Natural killer cell (primary cell): ENCODE measurements at regions of chr3 and their contacts with region 1.

Region 1: GRCh38 chr3:98188545-98188944 is 22.0 kb downstream of the OR5H15 start:
- DNase-seq: peak in 1 of 2 donors; percentile 14
- ATAC-seq: peak in 1 of 3 donors; percentile 35
- H3K4me3 ChIP-seq: no peak overlapping the region
- H3K4me3 Mint-ChIP-seq: no peak overlapping the region
- H3K27ac ChIP-seq: no peak overlapping the region
- H3K27ac Mint-ChIP-seq: no peak overlapping the region
- H3K4me1 ChIP-seq: no peaks in the 10 kb centered on the region
- H3K4me1 Mint-ChIP-seq: no peaks in the 10 kb centered on the region
- H3K27me3 ChIP-seq: no peaks in the 10 kb centered on the region
- H3K27me3 Mint-ChIP-seq: no peaks in the 10 kb centered on the region
- CTCF ChIP-seq: no peak

Region 2: DNA sequence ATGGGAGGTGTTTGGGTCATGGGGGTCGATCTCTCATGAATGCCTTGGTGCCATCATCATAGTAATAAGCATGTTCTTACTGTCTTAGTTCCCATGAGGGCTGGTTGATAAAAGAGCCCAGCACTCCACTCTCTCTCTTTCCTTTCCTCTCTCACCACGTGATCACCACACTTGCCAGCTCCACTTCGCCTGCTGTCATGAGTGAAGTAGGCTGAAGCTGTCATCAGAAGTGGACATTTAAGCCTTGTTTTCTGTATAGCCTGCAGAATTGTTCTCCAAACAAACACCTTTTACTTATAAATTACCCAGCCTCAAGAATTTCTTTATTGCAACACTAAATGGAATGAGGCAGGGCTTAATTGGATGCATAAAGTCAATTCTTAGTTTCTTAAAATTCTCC is 51.9 kb before region 1 on chr3:
- intact Hi-C with region 1: loop called (anchors 1 kb)
- DNase-seq: no peak
- ATAC-seq: no peak
- H3K4me3 ChIP-seq: no peak overlapping the region
- H3K4me3 Mint-ChIP-seq: no peak overlapping the region
- H3K27ac ChIP-seq: no peak overlapping the region
- H3K27ac Mint-ChIP-seq: no peak overlapping the region
- H3K4me1 ChIP-seq: no peaks in the 10 kb centered on the region
- H3K4me1 Mint-ChIP-seq: no peaks in the 10 kb centered on the region
- H3K27me3 ChIP-seq: no peaks in the 10 kb centered on the region
- H3K27me3 Mint-ChIP-seq: no peaks in the 10 kb centered on the region
- CTCF ChIP-seq: no peak

Region 3: GRCh38 chr3:98151241-98151640 is 37.3 kb before region 1 on chr3:
- intact Hi-C with region 1: no loop called
- DNase-seq: no peak
- ATAC-seq: no peak
- H3K4me3 ChIP-seq: no peak overlapping the region
- H3K4me3 Mint-ChIP-seq: no peak overlapping the region
- H3K27ac ChIP-seq: no peak overlapping the region
- H3K27ac Mint-ChIP-seq: no peak overlapping the region
- H3K4me1 ChIP-seq: no peaks in the 10 kb centered on the region
- H3K4me1 Mint-ChIP-seq: no peaks in the 10 kb centered on the region
- H3K27me3 ChIP-seq: no peaks in the 10 kb centered on the region
- H3K27me3 Mint-ChIP-seq: no peaks in the 10 kb centered on the region
- CTCF ChIP-seq: no peak